ENCODE measurements at regions of chr2 and their contacts with region 1.

Region 1: DNA sequence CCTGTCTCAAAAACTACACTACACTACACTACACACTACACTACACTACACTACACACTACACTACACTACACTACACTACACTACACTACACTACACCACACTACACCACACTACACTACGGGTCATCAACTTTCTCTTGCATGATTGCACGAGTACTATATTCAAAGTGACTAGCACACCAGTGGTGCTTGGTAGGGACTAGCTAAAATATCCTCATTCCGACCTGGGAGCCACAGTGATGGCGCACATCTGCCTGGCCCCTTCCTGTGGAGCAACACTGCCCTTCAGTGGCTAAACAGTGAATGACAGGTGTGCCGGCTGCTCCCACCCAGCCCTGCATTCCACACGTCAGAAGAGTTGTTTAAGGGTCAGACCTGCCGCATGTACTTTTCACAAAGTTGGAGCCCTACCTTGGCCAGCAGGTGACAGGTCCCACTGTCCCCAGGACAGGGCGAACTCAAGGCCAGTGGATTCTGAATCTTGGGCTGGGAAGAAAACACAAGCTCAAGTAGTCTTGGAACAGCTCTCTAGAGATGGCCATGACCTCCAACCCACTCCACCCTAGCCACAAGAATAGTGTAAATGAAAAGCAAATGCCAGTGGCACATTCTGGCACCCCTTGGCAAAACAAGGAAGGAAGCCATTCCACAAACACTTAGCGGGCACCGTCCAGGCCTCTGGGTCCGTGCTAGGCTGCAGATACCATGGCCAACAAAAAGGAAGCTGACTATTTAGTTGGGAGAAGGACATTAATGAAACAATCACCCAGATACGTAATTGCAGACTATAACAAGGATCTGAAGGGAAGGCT is 79.7 kb upstream of the MSH2 start:
- DNase-seq: peak; percentile 72 to 94
- H3K4me3 ChIP-seq: no peak overlapping the region
- H3K27ac ChIP-seq: no peak overlapping the region
- H3K4me1 ChIP-seq: peaks cover 0 to 5% (median under 1%) of the 10 kb centered on the region in 4 experiments; a peak in 1 of 7 replicates
- H3K27me3 ChIP-seq: no peaks in the 10 kb centered on the region
- CTCF ChIP-seq: peak; percentile 97 to 100 (median 97)
- EP300 ChIP-seq: no peak
- POLR2A ChIP-seq: no peak; a peak in 1 of 3 replicates
- RAD21 ChIP-seq: peak; percentile 100

Region 2: GRCh38 chr2:47008381-47009252 is 314.6 kb before region 1 on chr2:
- CTCF ChIA-PET with region 1: interaction called, 14 read pairs
- POLR2A ChIA-PET with region 1: no interaction called
- DNase-seq: no peak
- H3K4me3 ChIP-seq: no peak overlapping the region
- H3K27ac ChIP-seq: peak overlapping the region; percentile 64
- H3K4me1 ChIP-seq: peaks cover 0 to 7% (median 3%) of the 10 kb centered on the region in 4 experiments; a peak in 5 of 7 replicates
- H3K27me3 ChIP-seq: no peaks in the 10 kb centered on the region
- CTCF ChIP-seq: no peak
- EP300 ChIP-seq: no peak
- POLR2A ChIP-seq: no peak
- RAD21 ChIP-seq: no peak; a peak in 1 of 4 replicates

Region 3: GRCh38 chr2:47127862-47128543 is 195.2 kb before region 1 on chr2:
- CTCF ChIA-PET with region 1: interaction called, 41 read pairs
- POLR2A ChIA-PET with region 1: interaction called, 6 read pairs
- DNase-seq: no peak
- H3K4me3 ChIP-seq: no peak overlapping the region
- H3K27ac ChIP-seq: no peak overlapping the region
- H3K4me1 ChIP-seq: peaks cover 0 to 13% (median 3%) of the 10 kb centered on the region in 4 experiments; a peak in 6 of 7 replicates
- H3K27me3 ChIP-seq: no peaks in the 10 kb centered on the region; a peak in 2 of 7 replicates
- CTCF ChIP-seq: peak in 2 of 3 experiments; percentile 34 to 35; a peak in 2 of 4 replicates
- EP300 ChIP-seq: no peak
- POLR2A ChIP-seq: no peak
- RAD21 ChIP-seq: peak; percentile 55 to 73

Region 4: GRCh38 chr2:47180531-47180930 is 142.7 kb before region 1 on chr2:
- CTCF ChIA-PET with region 1: interaction called, 18 read pairs
- POLR2A ChIA-PET with region 1: no interaction called
- DNase-seq: no peak
- H3K4me3 ChIP-seq: no peak overlapping the region
- H3K27ac ChIP-seq: no peak overlapping the region
- H3K4me1 ChIP-seq: peaks cover 6 to 14% (median 13%) of the 10 kb centered on the region in 4 experiments; a peak in 6 of 7 replicates
- H3K27me3 ChIP-seq: no peaks in the 10 kb centered on the region; a peak in 2 of 7 replicates
- CTCF ChIP-seq: no peak
- EP300 ChIP-seq: no peak
- POLR2A ChIP-seq: no peak
- RAD21 ChIP-seq: no peak

Region 5: GRCh38 chr2:47272031-47272864 is 51.0 kb before region 1 on chr2:
- CTCF ChIA-PET with region 1: interaction called, 58 read pairs
- POLR2A ChIA-PET with region 1: no interaction called
- DNase-seq: peak in 1 of 2 experiments; percentile 96
- H3K4me3 ChIP-seq: peak overlapping the region in 3 of 4 experiments; percentile 3 to 56 (median 12); a peak in 3 of 8 replicates
- H3K27ac ChIP-seq: no peak overlapping the region
- H3K4me1 ChIP-seq: peaks cover 0 to 4% (median 0%) of the 10 kb centered on the region in 4 experiments; a peak in 4 of 7 replicates
- H3K27me3 ChIP-seq: no peaks in the 10 kb centered on the region; a peak in 1 of 7 replicates
- CTCF ChIP-seq: peak; percentile 87 to 97 (median 91)
- EP300 ChIP-seq: no peak
- POLR2A ChIP-seq: no peak
- RAD21 ChIP-seq: peak; percentile 84 to 85

Region 6: DNA sequence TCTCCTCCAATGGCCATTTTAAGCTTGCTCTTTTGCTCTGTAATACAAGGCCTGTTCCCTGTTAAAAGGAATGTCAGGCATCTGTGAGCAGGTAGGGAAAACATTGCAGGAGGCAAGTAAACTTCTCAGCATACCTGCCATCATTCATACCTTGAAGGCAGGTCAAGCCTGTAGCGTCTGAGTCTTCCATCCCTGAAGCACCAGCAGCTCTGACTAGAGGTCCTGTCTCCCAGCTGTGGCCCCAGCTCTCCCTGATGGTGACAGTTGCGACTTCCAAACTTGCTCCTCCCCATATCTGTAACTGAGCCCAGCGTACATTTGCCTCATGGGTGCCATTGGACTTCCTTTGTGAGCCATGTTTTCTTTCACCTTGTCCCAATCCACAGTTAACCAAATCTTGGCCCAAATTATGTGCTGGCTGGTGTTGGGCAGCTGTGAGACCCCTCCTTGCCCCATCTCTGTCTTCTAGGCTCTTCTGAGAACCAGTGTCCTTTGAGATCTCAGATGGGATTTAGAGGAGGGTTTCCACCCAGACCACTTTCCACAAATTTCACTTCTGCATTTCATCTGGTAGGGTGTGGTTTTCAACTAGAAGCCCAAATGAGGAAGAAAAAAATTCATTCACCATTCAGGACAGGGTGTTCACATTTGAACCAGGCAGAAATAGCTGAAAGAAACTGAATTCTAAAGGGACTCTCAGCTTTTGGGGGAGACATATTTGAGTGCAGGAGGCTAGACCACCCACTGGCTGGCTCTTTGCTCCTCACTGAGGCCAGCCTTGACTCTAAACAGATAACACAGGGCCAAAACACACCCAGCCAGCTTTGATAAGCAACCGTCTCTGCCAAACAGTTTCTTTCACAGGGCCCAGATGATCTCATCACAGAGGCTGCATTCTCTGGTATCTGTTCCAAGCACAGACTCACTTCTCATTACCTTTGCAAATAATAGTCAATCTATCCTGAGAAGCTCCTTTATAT is 13.3 kb after region 1 on chr2:
- CTCF ChIA-PET with region 1: interaction called, 63 read pairs
- POLR2A ChIA-PET with region 1: interaction called, 5 read pairs
- DNase-seq: no peak
- H3K4me3 ChIP-seq: no peak overlapping the region
- H3K27ac ChIP-seq: no peak overlapping the region
- H3K4me1 ChIP-seq: peaks cover 0 to 21% (median 11%) of the 10 kb centered on the region in 4 experiments
- H3K27me3 ChIP-seq: no peaks in the 10 kb centered on the region
- CTCF ChIP-seq: no peak
- EP300 ChIP-seq: no peak
- POLR2A ChIP-seq: no peak
- RAD21 ChIP-seq: no peak

Region 7: DNA sequence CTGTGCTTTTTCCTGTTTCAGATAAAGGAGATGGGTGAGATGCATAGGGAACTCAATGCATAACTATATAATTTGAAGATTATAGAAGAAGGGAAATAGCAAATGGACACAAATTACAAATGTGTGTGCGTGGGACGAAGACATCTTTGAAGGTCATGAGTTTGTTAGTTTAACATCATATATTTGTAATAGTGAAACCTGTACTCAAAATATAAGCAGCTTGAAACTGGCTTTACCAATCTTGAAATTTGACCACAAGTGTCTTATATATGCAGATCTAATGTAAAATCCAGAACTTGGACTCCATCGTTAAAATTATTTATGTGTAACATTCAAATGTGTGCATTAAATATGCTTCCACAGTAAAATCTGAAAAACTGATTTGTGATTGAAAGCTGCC is 63.3 kb after region 1 on chr2:
- CTCF ChIA-PET with region 1: interaction called, 22 read pairs
- POLR2A ChIA-PET with region 1: no interaction called
- DNase-seq: no peak
- H3K4me3 ChIP-seq: no peak overlapping the region
- H3K27ac ChIP-seq: no peak overlapping the region
- H3K4me1 ChIP-seq: no peaks in the 10 kb centered on the region
- H3K27me3 ChIP-seq: no peaks in the 10 kb centered on the region
- CTCF ChIP-seq: no peak
- EP300 ChIP-seq: no peak
- POLR2A ChIP-seq: no peak
- RAD21 ChIP-seq: no peak

Region 8: GRCh38 chr2:47675196-47675825 is 352.1 kb after region 1 on chr2:
- CTCF ChIA-PET with region 1: no interaction called
- POLR2A ChIA-PET with region 1: no interaction called
- DNase-seq: no peak
- H3K4me3 ChIP-seq: no peak overlapping the region
- H3K27ac ChIP-seq: no peak overlapping the region
- H3K4me1 ChIP-seq: peaks cover 0 to 9% (median 5%) of the 10 kb centered on the region in 4 experiments; a peak in 3 of 7 replicates
- H3K27me3 ChIP-seq: no peaks in the 10 kb centered on the region
- CTCF ChIP-seq: no peak
- EP300 ChIP-seq: no peak
- POLR2A ChIP-seq: no peak
- RAD21 ChIP-seq: no peak

Measured in H1 (cell line).